ENCODE measurements at regions of chr7 and their contacts with region 1.

Region 1: DNA sequence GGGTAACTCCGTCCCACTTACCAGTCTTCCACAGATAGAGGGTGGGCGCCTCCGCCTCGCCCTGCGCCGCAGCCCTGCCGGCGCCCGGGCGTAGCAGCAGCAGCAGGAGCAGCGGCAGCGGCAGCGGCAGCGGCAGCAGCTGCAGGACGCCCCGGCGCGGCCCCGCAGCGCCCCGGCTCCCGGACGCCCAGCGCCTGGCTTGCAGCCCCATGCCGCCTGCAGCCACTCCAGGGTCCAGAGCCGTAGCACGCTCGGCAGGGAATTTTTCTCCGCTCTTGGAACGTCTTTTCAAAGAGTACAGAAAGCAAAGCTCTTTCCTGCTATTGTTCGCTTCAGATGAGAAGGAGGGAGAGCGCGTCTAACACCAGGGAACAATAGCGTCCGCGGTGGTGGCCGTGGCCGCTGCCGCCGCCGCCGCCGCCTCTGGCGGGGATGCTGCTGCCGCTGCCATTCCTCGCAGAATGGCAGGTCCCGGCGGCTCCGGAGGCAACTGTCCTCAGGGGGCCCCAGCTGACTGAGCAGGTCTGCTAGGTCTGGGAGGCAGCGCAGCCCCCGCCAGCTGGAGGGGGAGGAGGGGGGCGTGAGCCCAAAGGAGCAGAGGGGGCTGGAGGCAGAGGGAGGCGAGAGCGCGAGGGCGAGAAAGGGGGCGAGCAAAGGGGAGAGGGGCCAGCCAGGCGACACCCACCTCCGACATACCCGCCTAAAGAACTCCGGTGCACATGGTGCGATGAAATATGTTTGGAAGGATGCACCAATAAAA is at the start of gene THSD7A:
- DNase-seq: peak; percentile 92
- H3K4me3 ChIP-seq: peak within 1 kb of the TSS; percentile 68 to 69
- H3K27ac ChIP-seq: peak within 1 kb of the TSS in 1 of 2 experiments; percentile 99; a peak in 2 of 4 replicates
- H3K4me1 ChIP-seq: peaks cover 0 to 20% of the 10 kb centered on the region in 2 experiments; a peak in 2 of 4 replicates
- H3K27me3 ChIP-seq: no peaks in the 10 kb centered on the region
- CTCF ChIP-seq: 0 out of 2 replicates have a peak, but pooled peaks have one; percentile 9
- EP300 ChIP-seq: no peak
- RAD21 ChIP-seq: peak; percentile 10; the same call in 1 of the 2 replicates
- polyA plus RNA-seq, gene THSD7A: 0.16 and 0.49 TPM in 2 replicates

Region 2: GRCh38 chr7:11726794-11727155 is 105.1 kb before region 1 on chr7:
- CTCF ChIA-PET with region 1: interaction called, 5 read pairs
- POLR2A ChIA-PET with region 1: interaction called, 11 read pairs
- DNase-seq: peak; percentile 33
- H3K4me3 ChIP-seq: peak overlapping the region in 1 of 2 experiments; percentile 21; a peak in 1 of 4 replicates
- H3K27ac ChIP-seq: peak overlapping the region in 1 of 2 experiments; percentile 99; a peak in 2 of 4 replicates
- H3K4me1 ChIP-seq: peaks cover 0 to 40% of the 10 kb centered on the region in 2 experiments; a peak in 2 of 4 replicates
- H3K27me3 ChIP-seq: no peaks in the 10 kb centered on the region
- CTCF ChIP-seq: no peak
- EP300 ChIP-seq: peak in 1 of 2 experiments; percentile 70; a peak in 2 of 4 replicates
- RAD21 ChIP-seq: peak; percentile 46

Region 3: DNA sequence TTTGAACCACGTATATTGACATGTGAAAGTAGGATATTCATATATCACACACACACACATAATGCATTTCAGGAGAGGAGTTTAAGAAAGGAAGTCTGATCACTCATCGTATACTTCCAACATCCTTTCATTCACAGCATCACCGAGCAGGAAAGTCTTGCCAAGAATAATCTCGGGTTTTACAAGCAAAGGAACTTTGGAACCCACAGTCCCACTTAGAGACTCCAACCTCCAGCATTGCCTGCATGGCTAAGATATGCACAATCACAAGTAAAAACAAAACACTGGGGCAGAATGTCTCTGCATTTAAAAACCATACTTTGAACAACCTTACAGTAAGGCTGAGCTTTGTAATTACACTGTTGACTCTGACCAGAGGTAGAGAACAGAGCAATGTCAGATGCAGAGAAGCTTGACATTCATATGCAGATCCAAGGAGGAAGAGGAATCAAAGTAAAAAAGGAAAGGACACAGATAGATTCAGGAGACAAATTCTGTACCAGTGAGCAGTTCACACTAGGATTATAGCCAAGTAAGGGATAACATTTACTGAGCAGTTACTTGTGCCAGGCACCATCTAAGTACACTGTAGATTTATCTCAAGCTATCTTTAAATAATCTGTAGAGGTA is 14.7 kb before region 1 on chr7:
- CTCF ChIA-PET with region 1: interaction called, 13 read pairs
- POLR2A ChIA-PET with region 1: interaction called, 5 read pairs
- DNase-seq: no peak
- H3K4me3 ChIP-seq: no peak overlapping the region
- H3K27ac ChIP-seq: peak overlapping the region in 1 of 2 experiments; percentile 43; a peak in 2 of 4 replicates
- H3K4me1 ChIP-seq: peaks cover 0 to 11% of the 10 kb centered on the region in 2 experiments; a peak in 2 of 4 replicates
- H3K27me3 ChIP-seq: no peaks in the 10 kb centered on the region
- CTCF ChIP-seq: no peak
- EP300 ChIP-seq: no peak
- RAD21 ChIP-seq: no peak

Region 4: GRCh38 chr7:11985376-11985775 is 153.5 kb after region 1 on chr7:
- CTCF ChIA-PET with region 1: no interaction called
- POLR2A ChIA-PET with region 1: no interaction called
- DNase-seq: no peak
- H3K4me3 ChIP-seq: no peak overlapping the region
- H3K27ac ChIP-seq: no peak overlapping the region
- H3K4me1 ChIP-seq: no peaks in the 10 kb centered on the region
- H3K27me3 ChIP-seq: no peaks in the 10 kb centered on the region
- CTCF ChIP-seq: no peak
- EP300 ChIP-seq: no peak
- RAD21 ChIP-seq: no peak

Region 5: GRCh38 chr7:12322284-12322902 is 490.5 kb after region 1 on chr7:
- CTCF ChIA-PET with region 1: interaction called, 17 read pairs
- POLR2A ChIA-PET with region 1: no interaction called
- DNase-seq: peak; percentile 10
- H3K4me3 ChIP-seq: no peak overlapping the region
- H3K27ac ChIP-seq: no peak overlapping the region
- H3K4me1 ChIP-seq: no peaks in the 10 kb centered on the region; a peak in 1 of 4 replicates
- H3K27me3 ChIP-seq: no peaks in the 10 kb centered on the region
- CTCF ChIP-seq: peak; percentile 97
- EP300 ChIP-seq: no peak
- RAD21 ChIP-seq: peak; percentile 94

Measured in SK-N-SH (cell line).